ENCODE measurements at regions of chr1 and their contacts with region 1.

Region 1: DNA sequence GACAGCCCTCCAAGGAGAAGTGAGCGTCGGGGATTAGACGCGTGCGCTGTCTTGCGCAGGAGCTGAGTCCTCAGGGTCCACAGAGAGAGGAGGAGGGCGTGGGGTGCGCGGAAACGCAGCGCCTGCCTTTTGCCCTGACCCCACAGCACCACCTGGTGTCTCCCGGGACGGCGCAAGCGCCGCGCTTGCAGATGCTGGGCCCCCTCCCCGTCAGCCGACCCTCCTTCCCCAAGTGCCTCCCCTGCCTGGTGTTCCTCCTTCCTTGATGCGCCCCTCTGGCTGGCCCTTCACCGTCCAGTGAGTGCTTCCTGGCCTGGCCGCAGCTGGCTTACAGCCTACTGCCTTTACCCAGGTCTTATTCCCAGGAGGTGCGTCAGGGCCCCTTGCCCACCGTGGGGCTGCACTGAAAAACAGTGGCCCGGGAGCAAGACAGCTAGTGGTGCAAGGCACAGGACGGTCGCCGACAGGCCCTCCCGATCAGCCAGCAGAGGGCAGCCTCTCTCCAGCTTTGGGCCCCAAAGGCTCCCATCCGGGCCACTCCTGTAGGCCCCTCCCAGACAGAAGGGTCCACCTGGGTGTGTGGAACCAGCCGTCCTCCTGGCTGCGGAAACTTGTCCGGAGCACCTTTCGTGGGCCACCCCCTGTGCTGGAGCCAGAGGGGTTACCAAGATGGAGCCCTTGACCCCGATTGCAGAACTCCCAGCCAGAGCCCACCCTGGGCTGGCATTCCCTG is 12.9 kb upstream of the PHLDA3 start:
- DNase-seq: peak; percentile 52 to 86
- H3K4me3 ChIP-seq: no peak overlapping the region
- H3K27ac ChIP-seq: no peak overlapping the region
- H3K4me1 ChIP-seq: peaks cover 30% of the 10 kb centered on the region
- H3K27me3 ChIP-seq: no peaks in the 10 kb centered on the region
- CTCF ChIP-seq: peak; percentile 86

Region 2: GRCh38 chr1:201447911-201448871 is 33.7 kb before region 1 on chr1:
- CTCF ChIA-PET with region 1: interaction called, 41 read pairs
- POLR2A ChIA-PET with region 1: no interaction called
- intact Hi-C with region 1: loop called (anchors 1 kb)
- DNase-seq: peak; percentile 65 to 72
- H3K4me3 ChIP-seq: no peak overlapping the region
- H3K27ac ChIP-seq: peak overlapping the region; percentile 38
- H3K4me1 ChIP-seq: peaks cover 22% of the 10 kb centered on the region
- H3K27me3 ChIP-seq: no peaks in the 10 kb centered on the region
- CTCF ChIP-seq: peak; percentile 92

Region 3: GRCh38 chr1:201511941-201512539 is 30.1 kb after region 1 on chr1:
- CTCF ChIA-PET with region 1: interaction called, 74 read pairs
- POLR2A ChIA-PET with region 1: no interaction called
- intact Hi-C with region 1: loop called (anchors 1 kb)
- DNase-seq: peak in 1 of 2 experiments; percentile 24
- H3K4me3 ChIP-seq: no peak overlapping the region
- H3K27ac ChIP-seq: no peak overlapping the region
- H3K4me1 ChIP-seq: peaks cover 48% of the 10 kb centered on the region
- H3K27me3 ChIP-seq: no peaks in the 10 kb centered on the region
- CTCF ChIP-seq: no peak

Region 4: GRCh38 chr1:201559679-201560162 is 77.8 kb after region 1 on chr1:
- CTCF ChIA-PET with region 1: interaction called, 3 read pairs
- POLR2A ChIA-PET with region 1: no interaction called
- intact Hi-C with region 1: loop called (anchors 2 kb)
- DNase-seq: peak; percentile 53 to 73
- H3K4me3 ChIP-seq: no peak overlapping the region
- H3K27ac ChIP-seq: no peak overlapping the region
- H3K4me1 ChIP-seq: peaks cover 3% of the 10 kb centered on the region; the same call in 1 of the 2 replicates
- H3K27me3 ChIP-seq: no peaks in the 10 kb centered on the region
- CTCF ChIP-seq: peak; percentile 92

Region 5: DNA sequence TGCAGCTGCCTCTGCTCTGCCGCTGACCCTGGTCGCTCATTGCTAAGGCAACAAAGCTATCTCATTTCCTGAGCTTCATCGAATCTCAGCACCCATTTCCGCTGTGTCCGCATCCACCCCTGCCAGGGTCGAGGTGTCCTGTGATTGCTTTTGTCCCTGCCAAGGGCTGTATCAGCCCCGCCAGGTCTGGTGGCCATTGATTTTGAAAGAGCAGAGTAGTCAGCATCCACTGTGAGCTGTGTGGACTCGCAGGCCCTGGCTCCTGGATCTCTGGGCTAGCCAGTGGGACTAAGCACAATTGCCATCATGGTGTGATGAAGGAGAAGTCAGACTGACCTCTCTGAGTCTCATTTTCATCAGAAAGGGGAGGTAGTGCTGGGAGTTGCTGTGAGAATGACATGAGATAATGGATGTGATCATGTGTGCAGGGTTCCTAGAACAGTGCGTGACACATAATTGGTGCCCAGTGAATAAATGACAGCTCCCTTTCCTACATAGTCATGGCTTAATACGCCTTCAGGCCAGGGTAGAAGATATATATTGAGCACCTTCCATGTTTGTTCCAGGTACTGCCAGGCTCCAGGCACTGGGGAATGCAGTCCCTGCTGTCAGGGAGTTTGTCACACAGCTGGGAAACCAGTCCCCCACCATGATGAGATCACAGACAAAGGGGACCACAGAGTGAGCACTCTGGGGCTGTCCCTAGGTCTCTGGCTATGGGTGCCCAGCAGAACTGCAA is 89.1 kb after region 1 on chr1:
- CTCF ChIA-PET with region 1: no interaction called
- POLR2A ChIA-PET with region 1: no interaction called
- intact Hi-C with region 1: no loop called
- DNase-seq: no peak
- H3K4me3 ChIP-seq: no peak overlapping the region
- H3K27ac ChIP-seq: no peak overlapping the region
- H3K4me1 ChIP-seq: no peaks in the 10 kb centered on the region
- H3K27me3 ChIP-seq: no peaks in the 10 kb centered on the region
- CTCF ChIP-seq: no peak

Region 6: DNA sequence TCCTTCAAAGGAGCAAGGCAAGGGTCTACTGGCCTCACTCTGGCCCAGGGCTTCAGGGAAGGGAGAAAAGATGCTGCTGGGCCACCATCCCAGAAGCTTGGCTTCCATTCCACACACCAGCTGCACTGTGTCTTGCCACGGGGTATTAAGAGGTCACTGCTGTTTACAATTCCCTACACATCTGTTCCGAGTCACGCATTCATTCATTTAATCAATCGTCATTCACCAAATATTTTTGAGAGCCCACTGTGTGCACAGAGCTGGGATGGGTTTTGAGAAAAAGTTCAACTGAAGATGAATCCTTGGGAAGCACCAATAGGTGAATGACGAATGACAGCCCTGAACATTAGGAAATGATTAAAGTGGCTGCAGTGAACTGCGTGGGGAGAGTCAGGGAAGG is 158.7 kb after region 1 on chr1:
- CTCF ChIA-PET with region 1: no interaction called
- POLR2A ChIA-PET with region 1: no interaction called
- intact Hi-C with region 1: no loop called
- DNase-seq: no peak
- H3K4me3 ChIP-seq: no peak overlapping the region
- H3K27ac ChIP-seq: no peak overlapping the region
- H3K4me1 ChIP-seq: no peaks in the 10 kb centered on the region
- H3K27me3 ChIP-seq: no peaks in the 10 kb centered on the region
- CTCF ChIP-seq: no peak

Region 7: DNA sequence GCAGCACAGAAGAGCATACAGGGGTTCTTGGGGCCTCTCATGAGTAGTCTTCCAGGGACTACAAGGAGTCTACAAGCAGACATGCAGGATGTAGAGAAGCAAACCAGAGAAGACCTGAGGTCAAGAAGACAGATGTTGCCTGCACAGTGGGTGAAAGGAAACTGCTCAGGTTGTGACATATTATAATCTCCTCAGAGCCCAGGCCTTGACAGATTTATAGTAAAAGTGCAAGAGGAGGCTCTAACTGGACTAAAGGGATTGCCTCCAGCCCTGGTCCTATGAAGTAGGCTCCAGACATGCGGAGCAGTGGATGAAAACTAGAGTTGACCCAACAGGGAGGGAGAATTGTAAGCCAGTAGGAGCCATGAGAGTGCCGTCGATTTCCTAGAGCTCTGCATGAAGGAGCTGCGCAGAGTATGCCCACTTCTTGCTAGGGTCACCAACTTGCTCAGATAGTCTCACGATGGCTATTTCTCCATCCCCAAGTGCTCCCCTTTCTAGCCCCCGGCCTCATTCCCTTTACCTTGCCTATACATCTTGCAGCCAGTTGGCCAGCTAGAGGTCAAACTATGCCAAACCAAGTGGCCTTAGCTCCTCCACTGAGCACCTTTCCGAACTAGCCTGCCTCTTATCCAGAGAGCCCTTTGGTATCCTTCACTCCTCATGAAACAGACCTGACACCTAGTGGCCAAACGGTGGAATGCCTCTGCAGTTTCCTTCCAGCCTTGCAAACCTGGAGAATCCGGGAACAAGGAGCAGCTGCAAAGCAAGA is 310.8 kb after region 1 on chr1:
- CTCF ChIA-PET with region 1: no interaction called
- POLR2A ChIA-PET with region 1: no interaction called
- intact Hi-C with region 1: loop called (anchors 1 kb)
- DNase-seq: peak; percentile 65 to 73
- H3K4me3 ChIP-seq: no peak overlapping the region
- H3K27ac ChIP-seq: no peak overlapping the region
- H3K4me1 ChIP-seq: no peaks in the 10 kb centered on the region
- H3K27me3 ChIP-seq: no peaks in the 10 kb centered on the region
- CTCF ChIP-seq: peak; percentile 98

Region 8: DNA sequence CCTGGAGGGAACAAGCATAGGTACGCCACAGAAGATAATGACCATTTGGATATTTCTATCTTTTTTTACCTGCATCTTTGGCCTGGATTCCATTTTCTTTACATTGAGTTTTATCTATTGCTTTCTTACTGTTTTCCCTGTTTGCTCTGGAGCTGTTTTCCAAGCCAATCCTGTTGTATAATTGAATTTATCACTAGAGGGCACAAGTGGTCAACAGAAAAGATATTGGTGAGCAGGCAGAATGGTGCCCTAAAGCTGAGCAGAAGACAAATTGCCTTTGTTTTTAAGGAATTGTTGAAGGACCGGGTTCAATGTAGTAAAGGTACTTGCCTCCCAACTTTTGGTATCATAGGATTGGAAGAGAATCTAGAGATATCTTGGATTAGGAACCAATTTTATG is 1019.4 kb after region 1 on chr1:
- CTCF ChIA-PET with region 1: no interaction called
- POLR2A ChIA-PET with region 1: no interaction called
- intact Hi-C with region 1: no loop called
- DNase-seq: peak in 1 of 2 experiments; percentile 3
- H3K4me3 ChIP-seq: no peak overlapping the region
- H3K27ac ChIP-seq: no peak overlapping the region
- H3K4me1 ChIP-seq: no peaks in the 10 kb centered on the region
- H3K27me3 ChIP-seq: no peaks in the 10 kb centered on the region
- CTCF ChIP-seq: peak; percentile 68

Measured in PC-9 (cell line).